ENCODE measurements at regions of chr10 and their contacts with region 1.

Region 1: GRCh38 chr10:86521678-86522509 is at the start of gene WAPL:
- DNase-seq: peak; percentile 91 to 98 (median 94)
- ATAC-seq: peak; percentile 98
- H3K4me3 ChIP-seq: peak within 1 kb of the TSS; percentile 85
- H3K4me3 Mint-ChIP-seq: peak within 1 kb of the TSS; percentile 86 to 99 (median 96)
- H3K27ac ChIP-seq: peak within 1 kb of the TSS; percentile 97
- H3K27ac Mint-ChIP-seq: peak within 1 kb of the TSS; percentile 83 to 96 (median 94)
- H3K4me1 ChIP-seq: peaks cover 32 to 38% of the 10 kb centered on the region in 2 donors
- H3K4me1 Mint-ChIP-seq: peaks cover 41 to 75% (median 56%) of the 10 kb centered on the region in 7 donors
- H3K27me3 ChIP-seq: no peaks in the 10 kb centered on the region
- H3K27me3 Mint-ChIP-seq: no peaks in the 10 kb centered on the region
- total RNA-seq, gene WAPL: 40.3 to 59.2 (median 53.4) TPM

Region 2: DNA sequence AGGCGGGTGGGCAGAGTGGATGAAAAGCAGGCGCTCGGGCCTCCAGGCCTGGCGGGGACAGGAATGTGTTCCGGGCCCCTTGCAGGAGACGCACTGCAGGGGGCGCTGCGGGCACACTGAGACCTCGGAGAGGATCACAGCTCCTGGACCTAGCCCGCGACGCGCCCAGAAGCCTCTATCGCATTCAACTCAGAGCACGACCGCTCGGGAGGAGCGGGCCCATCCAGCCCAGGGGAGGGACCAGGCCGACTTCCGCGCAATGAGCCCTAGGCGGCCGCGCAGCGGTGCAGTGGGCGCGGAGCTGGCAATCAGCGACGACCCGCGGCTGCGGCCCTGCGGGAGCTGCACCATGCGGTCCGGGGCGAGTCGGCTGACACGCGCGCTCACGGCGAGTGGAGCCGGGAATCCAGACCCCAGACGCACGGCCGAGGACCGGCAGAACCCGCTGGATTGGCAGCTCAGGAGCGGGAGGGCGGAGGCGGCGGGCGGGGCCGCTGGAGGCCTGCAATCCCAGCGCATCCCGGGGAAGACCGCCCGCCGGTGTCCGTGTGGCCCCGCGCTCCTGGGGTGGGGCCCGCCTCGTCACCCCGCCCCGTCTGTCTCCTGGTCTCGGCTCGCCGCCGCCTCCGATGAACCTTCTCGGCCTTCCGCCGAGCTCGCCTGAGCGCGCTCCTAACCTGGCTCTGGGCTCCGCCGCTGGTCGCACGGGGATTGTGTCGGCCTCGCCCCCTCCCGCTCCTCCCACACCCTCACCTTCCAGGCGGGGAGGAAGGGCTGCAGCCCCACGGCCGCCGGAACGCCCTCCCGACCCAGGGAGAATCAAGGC is 121.8 kb before region 1 on chr10:
- CTCF ChIA-PET with region 1: no interaction called
- POLR2A ChIA-PET with region 1: interaction called, 9 read pairs
- intact Hi-C with region 1: loop called (anchors 1 kb)
- DNase-seq: peak; percentile 86 to 93 (median 90)
- ATAC-seq: peak; percentile 95
- H3K4me3 ChIP-seq: peak overlapping the region; percentile 86
- H3K4me3 Mint-ChIP-seq: peak overlapping the region; percentile 79 to 95 (median 89)
- H3K27ac ChIP-seq: peak overlapping the region; percentile 76
- H3K27ac Mint-ChIP-seq: peak overlapping the region; percentile 83 to 97 (median 93)
- H3K4me1 ChIP-seq: peaks cover 0 to 10% of the 10 kb centered on the region in 2 donors
- H3K4me1 Mint-ChIP-seq: peaks cover 5 to 28% (median 23%) of the 10 kb centered on the region in 7 donors
- H3K27me3 ChIP-seq: no peaks in the 10 kb centered on the region
- H3K27me3 Mint-ChIP-seq: peaks cover 0 to 19% (median 0%) of the 10 kb centered on the region in 5 donors

Region 3: DNA sequence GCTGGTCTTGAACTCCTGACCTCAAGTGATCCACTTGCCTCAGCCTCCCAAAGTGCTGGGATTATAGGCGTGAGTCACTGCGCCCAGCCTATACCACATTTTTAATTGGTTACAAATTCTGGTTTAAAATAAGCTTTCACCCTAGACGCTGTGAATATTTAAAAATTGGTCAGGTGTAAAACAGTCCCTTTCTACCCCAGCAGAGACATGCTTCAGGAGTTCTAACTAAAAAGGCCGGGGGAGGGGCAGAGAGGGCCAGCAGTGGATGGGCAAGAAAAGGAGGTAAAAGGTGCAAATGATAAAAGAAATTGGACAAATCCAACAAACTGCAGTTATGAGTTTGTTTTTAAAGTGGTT is 70.3 kb before region 1 on chr10:
- CTCF ChIA-PET with region 1: no interaction called
- POLR2A ChIA-PET with region 1: interaction called, 4 read pairs
- intact Hi-C with region 1: loop called in 1 of 2 experiments (anchors 5 kb)
- DNase-seq: no peak
- ATAC-seq: no peak
- H3K4me3 ChIP-seq: no peak overlapping the region
- H3K4me3 Mint-ChIP-seq: no peak overlapping the region
- H3K27ac ChIP-seq: no peak overlapping the region
- H3K27ac Mint-ChIP-seq: peak overlapping the region in 6 of 9 donors; percentile 5 to 38 (median 22)
- H3K4me1 ChIP-seq: no peaks in the 10 kb centered on the region
- H3K4me1 Mint-ChIP-seq: peaks cover 15 to 45% (median 34%) of the 10 kb centered on the region in 7 donors
- H3K27me3 ChIP-seq: no peaks in the 10 kb centered on the region
- H3K27me3 Mint-ChIP-seq: no peaks in the 10 kb centered on the region

Region 4: DNA sequence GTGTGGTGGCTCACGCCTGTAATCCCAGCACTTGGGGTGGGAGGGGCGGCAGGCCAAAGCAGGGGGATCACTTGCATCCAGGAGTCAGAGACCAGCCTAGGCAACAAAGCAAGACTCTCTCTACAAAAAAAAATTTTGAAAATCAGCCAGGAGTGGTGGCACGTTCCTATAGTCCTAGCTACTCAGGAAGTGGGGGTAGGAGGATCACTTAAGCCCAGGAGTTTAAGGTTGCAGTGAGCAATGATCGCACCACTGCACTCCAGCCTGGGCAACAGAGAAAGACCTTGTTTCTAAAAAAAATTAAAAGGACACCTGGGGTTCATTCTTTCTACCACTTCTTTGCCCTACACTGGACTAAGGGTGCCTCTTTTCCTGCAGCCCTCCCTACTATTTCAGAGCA is 15.4 kb before region 1 on chr10:
- CTCF ChIA-PET with region 1: no interaction called
- POLR2A ChIA-PET with region 1: no interaction called
- intact Hi-C with region 1: loop called in 1 of 2 experiments (anchors 2 kb)
- DNase-seq: no peak
- ATAC-seq: no peak
- H3K4me3 ChIP-seq: no peak overlapping the region
- H3K4me3 Mint-ChIP-seq: peak overlapping the region in 3 of 10 donors; percentile 37 to 50 (median 45)
- H3K27ac ChIP-seq: no peak overlapping the region
- H3K27ac Mint-ChIP-seq: peak overlapping the region in 4 of 9 donors; percentile 4 to 81 (median 52)
- H3K4me1 ChIP-seq: peaks cover 2 to 8% of the 10 kb centered on the region in 2 donors
- H3K4me1 Mint-ChIP-seq: peaks cover 19 to 40% (median 30%) of the 10 kb centered on the region in 7 donors
- H3K27me3 ChIP-seq: no peaks in the 10 kb centered on the region
- H3K27me3 Mint-ChIP-seq: no peaks in the 10 kb centered on the region

Region 5: GRCh38 chr10:86585037-86585725 is 63.3 kb after region 1 on chr10:
- CTCF ChIA-PET with region 1: interaction called, 4 read pairs
- POLR2A ChIA-PET with region 1: no interaction called
- intact Hi-C with region 1: loop called (anchors 1 kb)
- DNase-seq: peak; percentile 57 to 81 (median 67)
- ATAC-seq: peak; percentile 95
- H3K4me3 ChIP-seq: no peak overlapping the region
- H3K4me3 Mint-ChIP-seq: no peak overlapping the region
- H3K27ac ChIP-seq: no peak overlapping the region
- H3K27ac Mint-ChIP-seq: no peak overlapping the region
- H3K4me1 ChIP-seq: no peaks in the 10 kb centered on the region
- H3K4me1 Mint-ChIP-seq: peaks cover 0 to 4% (median 0%) of the 10 kb centered on the region in 7 donors
- H3K27me3 ChIP-seq: no peaks in the 10 kb centered on the region
- H3K27me3 Mint-ChIP-seq: peaks cover 0 to 2% (median 0%) of the 10 kb centered on the region in 5 donors

Region 6: GRCh38 chr10:86755740-86756510 is 234.0 kb after region 1 on chr10:
- CTCF ChIA-PET with region 1: no interaction called
- POLR2A ChIA-PET with region 1: no interaction called
- intact Hi-C with region 1: loop called in 1 of 2 experiments (anchors 5 kb)
- DNase-seq: peak; percentile 68 to 95 (median 82)
- ATAC-seq: peak; percentile 97
- H3K4me3 ChIP-seq: peak overlapping the region; percentile 73
- H3K4me3 Mint-ChIP-seq: peak overlapping the region; percentile 78 to 95 (median 86)
- H3K27ac ChIP-seq: peak overlapping the region; percentile 50
- H3K27ac Mint-ChIP-seq: peak overlapping the region in 4 of 9 donors; percentile 31 to 71 (median 50)
- H3K4me1 ChIP-seq: peaks cover 9 to 11% of the 10 kb centered on the region in 2 donors
- H3K4me1 Mint-ChIP-seq: peaks cover 13 to 47% (median 36%) of the 10 kb centered on the region in 7 donors
- H3K27me3 ChIP-seq: peaks cover 0 to 6% of the 10 kb centered on the region in 2 donors
- H3K27me3 Mint-ChIP-seq: peaks cover 24 to 52% (median 31%) of the 10 kb centered on the region in 5 donors

Region 7: DNA sequence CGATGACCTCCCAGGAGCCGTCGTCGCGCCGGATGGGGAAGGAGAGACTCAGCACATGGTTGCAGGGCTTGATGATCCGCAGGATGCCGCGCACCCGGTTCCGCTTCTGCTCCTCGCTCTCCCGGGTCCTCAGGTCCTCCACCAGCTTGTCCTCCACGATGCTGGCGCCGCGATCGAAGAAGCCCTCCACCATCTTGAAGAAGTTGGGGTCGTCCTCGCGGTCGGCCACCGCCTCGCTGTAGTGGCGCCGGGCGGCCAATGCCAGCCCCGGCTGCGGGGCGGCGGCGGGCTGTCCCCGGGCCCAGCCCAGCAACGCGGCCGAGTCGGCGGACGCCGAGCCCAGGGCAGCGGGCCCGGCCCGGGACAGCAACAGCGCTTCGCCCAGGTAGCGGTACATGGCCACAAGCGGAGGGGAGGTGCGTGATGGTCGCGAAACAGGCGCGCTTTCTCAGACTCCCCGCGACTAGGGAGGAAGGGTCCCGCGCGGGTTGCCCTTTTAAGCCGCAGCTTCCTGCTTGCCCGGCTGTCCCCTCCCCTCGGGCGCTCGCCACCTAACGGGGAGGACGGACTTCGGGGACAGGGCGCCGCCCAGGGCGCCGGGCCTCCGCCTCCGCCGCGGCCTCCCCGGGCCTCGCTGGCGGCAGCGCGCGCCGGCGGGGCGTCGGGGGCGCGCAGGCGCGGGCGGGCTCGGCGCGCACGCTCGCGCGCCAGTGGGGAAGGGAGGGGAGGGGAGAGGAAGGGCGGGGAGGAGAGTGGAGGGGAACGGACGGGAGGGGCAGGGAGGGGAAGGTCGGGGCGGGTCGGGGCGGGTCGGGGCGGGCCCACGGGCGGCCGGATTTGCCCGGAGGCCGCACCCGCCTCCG is 572.7 kb after region 1 on chr10 and contains the starts of genes GLUD1 and SHLD2:
- CTCF ChIA-PET with region 1: no interaction called
- POLR2A ChIA-PET with region 1: no interaction called
- intact Hi-C with region 1: loop called (anchors 1 to 10 kb)
- DNase-seq: peak; percentile 78 to 94 (median 84)
- ATAC-seq: peak; percentile 81
- H3K4me3 ChIP-seq: peak within 1 kb of the TSS; percentile 74
- H3K4me3 Mint-ChIP-seq: peak within 1 kb of the TSS; percentile 89 to 97 (median 94)
- H3K27ac ChIP-seq: peak within 1 kb of the TSS; percentile 88
- H3K27ac Mint-ChIP-seq: peak within 1 kb of the TSS; percentile 89 to 97 (median 94)
- H3K4me1 ChIP-seq: peaks cover 12 to 27% of the 10 kb centered on the region in 2 donors
- H3K4me1 Mint-ChIP-seq: peaks cover 38 to 65% (median 52%) of the 10 kb centered on the region in 7 donors
- H3K27me3 ChIP-seq: no peaks in the 10 kb centered on the region
- H3K27me3 Mint-ChIP-seq: no peaks in the 10 kb centered on the region
- total RNA-seq, gene GLUD1: 70.2 to 98.1 (median 73.2) TPM
- total RNA-seq, gene SHLD2: 19.3 to 31.4 (median 21.1) TPM